Mammary epithelial cell (primary cell): ENCODE measurements at regions of chr12 and their contacts with region 1.

Region 1: DNA sequence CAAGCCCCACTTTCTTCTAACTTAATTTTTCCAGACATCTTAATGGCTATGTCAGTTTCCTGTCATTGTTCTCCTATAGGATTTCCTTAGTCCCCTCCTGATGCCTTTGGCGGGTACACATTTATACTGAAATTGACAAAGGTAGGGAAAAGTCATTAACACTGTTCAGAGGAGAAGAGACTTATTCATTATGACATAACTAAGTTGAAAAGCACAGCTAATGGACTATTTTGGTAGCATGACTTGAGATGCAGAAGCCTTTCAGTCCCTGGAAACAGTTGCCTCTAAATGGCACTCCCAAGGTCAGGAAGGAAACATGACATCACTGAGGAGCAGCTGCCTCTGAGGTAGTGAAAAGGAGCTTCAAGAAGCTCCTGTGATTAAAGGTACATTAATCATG is 317.5 kb upstream of the KITLG start:
- DNase-seq: no peak
- H3K4me3 ChIP-seq: no peak overlapping the region
- H3K27ac ChIP-seq: no peak overlapping the region
- H3K4me1 ChIP-seq: no peaks in the 10 kb centered on the region
- H3K27me3 ChIP-seq: no peaks in the 10 kb centered on the region
- CTCF ChIP-seq: no peak

Region 2: DNA sequence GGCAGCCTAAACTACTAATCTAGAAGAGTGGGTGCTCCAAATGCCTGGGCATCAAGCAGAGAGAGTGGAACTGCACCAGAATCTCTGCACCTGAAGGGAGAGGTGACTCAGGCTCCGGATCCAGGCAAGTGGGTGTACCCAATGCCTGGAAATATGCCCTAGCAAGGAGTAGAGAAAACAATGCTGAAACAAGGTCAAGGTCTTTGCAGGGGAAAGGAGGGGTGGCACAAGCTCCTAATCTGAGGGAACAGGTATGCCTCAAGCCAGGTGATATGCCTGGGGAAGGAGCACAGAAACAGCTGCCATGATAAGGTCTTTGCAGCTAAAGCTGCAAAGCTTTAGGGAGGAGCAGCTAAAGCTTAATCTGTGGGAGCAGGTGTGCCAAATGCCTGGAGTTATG is 181.5 kb before region 1 on chr12:
- CTCF ChIA-PET with region 1: interaction called, 13 read pairs
- dilution Hi-C with region 1: no loop called
- in situ Hi-C with region 1: no loop called
- intact Hi-C with region 1: no loop called
- DNase-seq: no peak
- H3K4me3 ChIP-seq: no peak overlapping the region
- H3K27ac ChIP-seq: no peak overlapping the region
- H3K4me1 ChIP-seq: peaks cover 6% of the 10 kb centered on the region
- H3K27me3 ChIP-seq: no peaks in the 10 kb centered on the region
- CTCF ChIP-seq: no peak

Region 3: GRCh38 chr12:88781909-88782308 is 115.8 kb before region 1 on chr12:
- CTCF ChIA-PET with region 1: no interaction called
- dilution Hi-C with region 1: no loop called
- in situ Hi-C with region 1: no loop called
- intact Hi-C with region 1: no loop called
- DNase-seq: peak; percentile 66
- H3K4me3 ChIP-seq: no peak overlapping the region
- H3K27ac ChIP-seq: peak overlapping the region; percentile 45
- H3K4me1 ChIP-seq: peaks cover 18% of the 10 kb centered on the region
- H3K27me3 ChIP-seq: no peaks in the 10 kb centered on the region
- CTCF ChIP-seq: no peak